Endothelial cell of umbilical vein (primary cell): ENCODE measurements at regions of chr15 and their contacts with region 1.

Region 1: DNA sequence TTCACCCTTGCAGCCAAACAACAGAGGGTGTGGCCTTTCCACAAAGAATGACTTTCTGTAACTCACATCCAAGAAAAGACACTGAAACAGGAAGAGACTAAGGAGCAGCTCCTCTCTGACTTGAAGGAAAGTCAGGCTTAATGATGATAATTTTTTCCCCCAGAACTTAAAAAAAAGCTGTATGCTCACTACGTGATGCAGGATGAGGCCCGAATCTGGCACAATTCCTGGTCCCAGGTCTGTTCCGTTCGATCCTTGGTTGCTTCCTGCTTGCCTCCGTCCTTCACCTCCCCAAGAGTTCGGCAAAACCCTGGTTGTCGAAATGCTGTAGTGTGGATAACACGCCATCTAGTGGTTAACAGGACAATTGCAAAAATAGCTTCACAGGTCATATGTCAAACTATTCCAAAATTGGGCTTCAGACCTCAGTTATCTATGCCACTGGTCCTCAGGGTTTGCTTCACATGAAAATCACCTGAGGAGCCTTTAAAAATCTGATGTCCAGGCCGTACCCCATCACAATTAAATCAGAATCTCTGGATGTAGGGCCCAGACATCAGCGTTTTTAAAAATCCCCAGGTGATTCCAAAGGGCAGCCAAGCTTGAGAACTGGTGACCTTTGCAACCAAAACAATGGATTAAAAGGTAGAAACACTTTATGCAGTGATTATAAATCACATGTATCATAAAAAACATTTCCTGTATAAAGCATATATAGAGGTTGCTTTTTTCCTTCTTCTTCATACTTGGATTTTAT is 28.1 kb upstream of the SYNM start:
- DNase-seq: peak; percentile 73
- H3K4me3 ChIP-seq: peak overlapping the region; percentile 6 to 50 (median 8)
- H3K27ac ChIP-seq: no peak overlapping the region
- H3K4me1 ChIP-seq: peaks cover 2% of the 10 kb centered on the region
- H3K27me3 ChIP-seq: peaks cover 0 to 2% of the 10 kb centered on the region in 2 experiments
- CTCF ChIP-seq: peak; percentile 71 to 83
- POLR2A ChIP-seq: no peak

Region 2: DNA sequence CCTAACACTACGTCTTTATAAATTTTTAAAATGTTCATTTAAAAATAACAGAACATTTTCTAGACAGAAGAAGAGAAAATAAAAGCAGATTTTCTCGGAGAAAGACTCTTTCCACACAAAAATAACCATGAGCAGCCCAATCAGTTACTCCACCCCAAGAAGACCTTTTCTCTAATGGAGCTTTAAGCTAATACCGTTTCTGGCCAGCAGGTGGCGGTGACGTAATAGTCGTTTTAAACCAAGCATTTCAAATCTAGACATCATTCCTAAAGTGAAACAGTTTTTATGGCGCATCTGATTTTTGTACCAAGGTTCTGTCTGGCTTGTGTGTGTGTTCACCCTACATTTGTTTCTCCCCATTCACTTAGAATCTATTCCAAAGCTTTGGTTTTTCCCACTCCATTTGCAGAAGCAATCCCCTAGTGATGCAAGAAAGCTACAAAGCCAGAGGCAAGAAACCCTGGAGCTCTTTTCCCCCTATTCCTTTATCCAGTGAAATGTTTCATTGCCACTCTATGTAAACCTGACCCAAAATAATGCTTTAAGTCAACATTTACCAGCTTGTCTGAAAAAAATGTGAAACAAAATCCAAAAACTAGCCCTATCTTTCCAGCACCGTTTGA is 765.1 kb before region 1 on chr15:
- CTCF ChIA-PET with region 1: interaction called, 14 read pairs
- POLR2A ChIA-PET with region 1: no interaction called
- dilution Hi-C with region 1: no loop called
- intact Hi-C with region 1: no loop called
- DNase-seq: peak; percentile 71
- H3K4me3 ChIP-seq: no peak overlapping the region
- H3K27ac ChIP-seq: no peak overlapping the region
- H3K4me1 ChIP-seq: no peaks in the 10 kb centered on the region
- H3K27me3 ChIP-seq: no peaks in the 10 kb centered on the region
- CTCF ChIP-seq: peak; percentile 65 to 67
- POLR2A ChIP-seq: no peak

Region 3: GRCh38 chr15:98513428-98513991 is 563.2 kb before region 1 on chr15:
- CTCF ChIA-PET with region 1: interaction called, 170 read pairs
- POLR2A ChIA-PET with region 1: no interaction called
- dilution Hi-C with region 1: no loop called
- intact Hi-C with region 1: no loop called
- DNase-seq: no peak
- H3K4me3 ChIP-seq: no peak overlapping the region
- H3K27ac ChIP-seq: no peak overlapping the region
- H3K4me1 ChIP-seq: no peaks in the 10 kb centered on the region
- H3K27me3 ChIP-seq: peaks cover 0 to under 1% of the 10 kb centered on the region in 2 experiments
- CTCF ChIP-seq: no peak
- POLR2A ChIP-seq: no peak

Region 4: GRCh38 chr15:98596885-98597391 is 479.8 kb before region 1 on chr15:
- CTCF ChIA-PET with region 1: no interaction called
- POLR2A ChIA-PET with region 1: no interaction called
- dilution Hi-C with region 1: no loop called
- intact Hi-C with region 1: no loop called
- DNase-seq: no peak
- H3K4me3 ChIP-seq: no peak overlapping the region
- H3K27ac ChIP-seq: no peak overlapping the region
- H3K4me1 ChIP-seq: no peaks in the 10 kb centered on the region
- H3K27me3 ChIP-seq: peaks cover 6 to 11% of the 10 kb centered on the region in 2 experiments
- CTCF ChIP-seq: no peak
- POLR2A ChIP-seq: no peak

Region 5: GRCh38 chr15:98658831-98659699 is 417.7 kb before region 1 on chr15:
- CTCF ChIA-PET with region 1: interaction called, 14 read pairs
- POLR2A ChIA-PET with region 1: no interaction called
- dilution Hi-C with region 1: no loop called
- intact Hi-C with region 1: no loop called
- DNase-seq: peak; percentile 51
- H3K4me3 ChIP-seq: no peak overlapping the region
- H3K27ac ChIP-seq: no peak overlapping the region
- H3K4me1 ChIP-seq: peaks cover 23% of the 10 kb centered on the region
- H3K27me3 ChIP-seq: no peaks in the 10 kb centered on the region
- CTCF ChIP-seq: peak; percentile 75 to 81
- POLR2A ChIP-seq: no peak

Region 6: GRCh38 chr15:98881526-98882520 is 194.9 kb before region 1 on chr15:
- CTCF ChIA-PET with region 1: interaction called, 22 read pairs
- POLR2A ChIA-PET with region 1: no interaction called
- dilution Hi-C with region 1: no loop called
- intact Hi-C with region 1: no loop called
- DNase-seq: peak; percentile 49
- H3K4me3 ChIP-seq: no peak overlapping the region
- H3K27ac ChIP-seq: no peak overlapping the region
- H3K4me1 ChIP-seq: peaks cover 2% of the 10 kb centered on the region
- H3K27me3 ChIP-seq: no peaks in the 10 kb centered on the region
- CTCF ChIP-seq: peak in 1 of 2 donors; percentile 41
- POLR2A ChIP-seq: no peak

Region 7: DNA sequence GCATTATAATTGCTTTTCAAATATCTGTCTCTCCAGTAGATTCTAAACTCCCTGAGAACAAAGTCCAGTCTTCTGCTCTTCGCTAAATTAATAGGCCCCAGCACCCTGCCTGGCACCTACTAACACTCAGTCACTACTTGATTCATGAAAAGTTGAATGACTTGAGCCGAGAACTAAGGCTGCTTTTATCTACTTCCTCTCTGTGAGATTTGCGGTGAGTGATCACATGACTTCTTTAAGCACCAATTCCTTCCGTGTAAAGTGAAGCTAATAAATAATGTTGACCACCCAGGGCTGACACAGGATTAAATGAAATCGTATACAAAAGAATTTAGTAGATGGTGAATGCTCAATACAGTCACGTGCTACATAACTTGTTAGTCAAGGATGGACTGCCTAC is 24.5 kb before region 1 on chr15:
- CTCF ChIA-PET with region 1: interaction called, 79 read pairs
- POLR2A ChIA-PET with region 1: no interaction called
- dilution Hi-C with region 1: no loop called
- intact Hi-C with region 1: no loop called
- DNase-seq: no peak
- H3K4me3 ChIP-seq: no peak overlapping the region
- H3K27ac ChIP-seq: no peak overlapping the region
- H3K4me1 ChIP-seq: no peaks in the 10 kb centered on the region
- H3K27me3 ChIP-seq: no peaks in the 10 kb centered on the region
- CTCF ChIP-seq: no peak
- POLR2A ChIP-seq: no peak

Region 8: GRCh38 chr15:99104788-99105513 is 28.2 kb after region 1 on chr15 and contains the start of gene SYNM:
- CTCF ChIA-PET with region 1: interaction called, 15 read pairs
- POLR2A ChIA-PET with region 1: no interaction called
- dilution Hi-C with region 1: no loop called
- intact Hi-C with region 1: no loop called
- DNase-seq: peak; percentile 83
- H3K4me3 ChIP-seq: peak within 1 kb of the TSS; percentile 38 to 44 (median 42)
- H3K27ac ChIP-seq: no peak within 1 kb of the TSS
- H3K4me1 ChIP-seq: peaks cover 7% of the 10 kb centered on the region
- H3K27me3 ChIP-seq: peaks cover 3% of the 10 kb centered on the region in 2 experiments
- CTCF ChIP-seq: peak; percentile 68 to 93
- POLR2A ChIP-seq: peak; percentile 77
- total RNA-seq, gene SYNM: 10.2 and 20.4 TPM in 2 replicates